Head of caudate nucleus (tissue), 42 donors: ENCODE measurements at regions of chr1 and their contacts with region 1.

Region 1: GRCh38 chr1:94527447-94528031 is 14.0 kb downstream of the F3 start:
- DNase-seq: peak in 1 of 42 donors; percentile 20

Region 2: DNA sequence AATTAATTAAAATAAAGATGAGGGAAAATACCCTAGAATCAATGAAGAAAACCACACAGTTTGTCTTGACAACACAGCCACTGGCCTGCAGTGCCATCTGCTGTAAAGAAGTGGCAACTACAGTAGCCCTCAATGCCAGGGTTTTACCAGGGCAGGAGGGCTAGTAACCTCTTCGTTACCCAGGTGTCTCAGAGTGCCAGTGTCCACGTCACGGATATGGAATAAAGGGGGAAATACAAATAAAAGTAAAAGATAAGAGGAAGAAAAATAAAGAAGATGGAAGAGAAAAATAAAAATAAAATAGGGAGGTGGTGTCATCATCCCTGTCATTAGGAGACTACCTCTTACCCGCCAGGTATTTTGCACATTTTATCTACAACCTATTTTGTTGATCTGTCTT is 278.4 kb after region 1 on chr1:
- intact Hi-C with region 1: loop called (anchors 5 kb)
- DNase-seq: peak in 41 of 42 donors; percentile 49 to 87 (median 69)